HepG2 (cell line): ENCODE measurements at regions of chr10 and their contacts with region 1.

Region 1: GRCh38 chr10:80064120-80064886 is 14.2 kb upstream of the TMEM254 start:
- DNase-seq: no peak
- ATAC-seq: no peak
- H3K4me3 ChIP-seq: no peak overlapping the region
- H3K27ac ChIP-seq: no peak overlapping the region
- H3K4me1 ChIP-seq: peaks cover 6% of the 10 kb centered on the region
- H3K27me3 ChIP-seq: no peaks in the 10 kb centered on the region
- CTCF ChIP-seq: no peak
- EP300 ChIP-seq: no peak
- POLR2A ChIP-seq: no peak
- RAD21 ChIP-seq: no peak

Region 2: GRCh38 chr10:80131499-80131901 is 67.2 kb after region 1 on chr10:
- CTCF ChIA-PET with region 1: no interaction called
- POLR2A ChIA-PET with region 1: no interaction called
- in situ Hi-C with region 1: no loop called
- intact Hi-C with region 1: loop called (anchors 2 kb)
- DNase-seq: no peak
- ATAC-seq: no peak
- H3K4me3 ChIP-seq: no peak overlapping the region
- H3K27ac ChIP-seq: no peak overlapping the region
- H3K4me1 ChIP-seq: 0 out of 2 replicates have a peak, but pooled peaks cover 5% of the 10 kb centered on the region
- H3K27me3 ChIP-seq: peaks cover 5 to 22% of the 10 kb centered on the region in 2 experiments; a peak in 4 of 5 replicates
- CTCF ChIP-seq: no peak
- EP300 ChIP-seq: no peak
- POLR2A ChIP-seq: no peak
- RAD21 ChIP-seq: no peak

Region 3: DNA sequence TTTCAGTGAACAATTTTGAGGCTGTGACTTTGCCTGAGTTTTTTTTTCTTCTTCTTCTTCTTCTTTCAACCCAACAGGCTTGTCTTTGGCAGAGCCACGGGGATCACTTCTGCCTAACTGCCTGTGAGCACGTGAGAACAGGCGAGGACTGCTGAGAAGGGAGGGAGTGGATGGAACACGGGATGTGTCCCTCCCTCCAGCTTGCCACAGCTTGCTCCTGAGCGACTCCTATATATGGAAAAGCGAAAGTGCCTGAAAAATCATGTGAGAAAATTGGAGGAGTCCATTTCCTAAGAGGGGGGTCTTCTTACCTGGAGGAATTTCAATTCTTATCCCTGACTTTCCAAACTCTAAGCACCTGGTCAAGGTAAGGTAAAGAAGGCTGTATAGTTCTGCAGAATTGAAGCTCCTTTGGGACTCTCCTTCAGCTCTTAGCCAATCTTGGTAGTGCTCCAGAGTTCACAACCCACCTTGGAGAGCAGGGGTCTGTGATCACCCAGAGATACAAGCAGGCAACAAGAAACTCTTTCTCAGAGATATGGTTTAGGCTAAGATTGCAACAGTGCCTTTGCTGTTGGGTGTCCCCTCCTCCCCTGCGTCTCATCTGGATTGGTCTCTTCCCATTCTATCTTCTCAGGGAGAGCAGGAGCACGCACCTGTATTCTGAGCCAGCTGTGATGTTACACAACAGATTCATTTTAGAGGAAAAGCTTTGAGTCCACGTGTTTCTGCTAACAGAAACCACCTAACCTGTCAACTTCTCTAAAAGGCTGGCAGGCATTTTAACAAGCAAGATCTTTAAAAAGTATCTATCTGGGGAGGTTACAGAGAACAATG is 225.4 kb after region 1 on chr10 and contains the start of gene MAT1A:
- CTCF ChIA-PET with region 1: no interaction called
- POLR2A ChIA-PET with region 1: no interaction called
- in situ Hi-C with region 1: no loop called
- intact Hi-C with region 1: no loop called
- DNase-seq: peak; percentile 84
- ATAC-seq: peak; percentile 76
- H3K4me3 ChIP-seq: peak within 1 kb of the TSS; percentile 44 to 67 (median 62)
- H3K27ac ChIP-seq: peak within 1 kb of the TSS; percentile 94
- H3K4me1 ChIP-seq: peaks cover 93% of the 10 kb centered on the region
- H3K27me3 ChIP-seq: no peaks in the 10 kb centered on the region; a peak in 1 of 5 replicates
- CTCF ChIP-seq: peak; percentile 66
- EP300 ChIP-seq: peak in 1 of 2 experiments; percentile 50; a peak in 2 of 4 replicates
- POLR2A ChIP-seq: peak; percentile 35 to 76; a peak in 3 of 4 replicates
- RAD21 ChIP-seq: 0 out of 2 replicates have a peak, but pooled peaks have one; percentile 8
- total RNA-seq, gene MAT1A: 76.9 and 101 TPM in 2 replicates